ENCODE measurements at regions of chr7 and their contacts with region 1.

Region 1: DNA sequence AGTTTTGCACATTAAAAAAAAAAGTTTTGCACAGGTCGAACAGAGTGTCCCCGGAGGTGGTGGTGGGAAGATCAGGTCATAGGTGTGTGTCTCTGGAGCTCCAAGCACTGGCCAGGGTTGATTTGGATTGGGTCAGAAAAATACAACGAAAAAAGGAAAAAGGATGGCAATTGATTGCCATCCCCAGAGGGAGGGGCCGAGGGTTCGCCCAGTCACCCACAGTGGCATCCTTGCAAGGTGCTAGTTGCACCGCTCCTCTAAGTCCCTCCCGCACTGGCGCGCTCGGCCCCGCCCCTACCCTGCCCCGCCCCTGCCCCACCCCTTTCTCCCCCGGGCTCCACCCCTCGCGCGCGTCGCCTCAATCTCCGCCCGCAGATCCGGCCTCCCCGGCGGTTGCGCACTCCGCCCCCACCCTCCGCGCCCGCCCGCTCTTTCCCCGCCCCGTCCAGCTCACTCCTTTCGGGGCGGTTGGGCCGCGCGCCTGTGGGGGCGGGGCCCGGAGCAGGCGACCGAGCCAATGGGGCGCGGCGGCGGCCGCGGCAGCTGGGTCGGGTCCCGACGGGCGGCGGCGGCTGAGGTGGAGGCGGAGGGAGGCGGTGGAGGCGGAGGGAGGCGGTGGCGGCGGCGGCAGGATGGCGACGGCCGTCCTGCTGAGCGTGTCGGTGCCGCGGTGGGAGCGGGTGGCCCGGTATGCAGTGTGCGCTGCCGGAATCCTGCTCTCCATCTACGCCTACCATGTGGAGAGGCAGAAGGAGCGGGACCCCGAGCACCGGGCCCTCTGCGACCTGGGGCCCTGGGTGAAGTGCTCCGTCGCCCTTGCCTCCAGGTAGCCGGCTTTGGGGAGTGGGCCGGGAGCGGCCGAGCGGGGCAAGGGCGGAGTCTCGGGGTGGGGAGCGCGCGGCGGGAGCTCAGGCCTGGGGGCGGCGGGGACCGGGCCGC is 31.5 kb upstream of the ERV3-1 start:
- DNase-seq: peak; percentile 78
- ATAC-seq: peak; percentile 85
- H3K4me3 ChIP-seq: peak overlapping the region; percentile 75 to 91 (median 91); a peak in 5 of 6 replicates
- H3K27ac ChIP-seq: peak overlapping the region; percentile 85
- H3K4me1 ChIP-seq: peaks cover 42% of the 10 kb centered on the region
- H3K27me3 ChIP-seq: no peaks in the 10 kb centered on the region
- CTCF ChIP-seq: no peak
- EP300 ChIP-seq: no peak
- POLR2A ChIP-seq: peak; percentile 58 to 66
- RAD21 ChIP-seq: no peak

Region 2: DNA sequence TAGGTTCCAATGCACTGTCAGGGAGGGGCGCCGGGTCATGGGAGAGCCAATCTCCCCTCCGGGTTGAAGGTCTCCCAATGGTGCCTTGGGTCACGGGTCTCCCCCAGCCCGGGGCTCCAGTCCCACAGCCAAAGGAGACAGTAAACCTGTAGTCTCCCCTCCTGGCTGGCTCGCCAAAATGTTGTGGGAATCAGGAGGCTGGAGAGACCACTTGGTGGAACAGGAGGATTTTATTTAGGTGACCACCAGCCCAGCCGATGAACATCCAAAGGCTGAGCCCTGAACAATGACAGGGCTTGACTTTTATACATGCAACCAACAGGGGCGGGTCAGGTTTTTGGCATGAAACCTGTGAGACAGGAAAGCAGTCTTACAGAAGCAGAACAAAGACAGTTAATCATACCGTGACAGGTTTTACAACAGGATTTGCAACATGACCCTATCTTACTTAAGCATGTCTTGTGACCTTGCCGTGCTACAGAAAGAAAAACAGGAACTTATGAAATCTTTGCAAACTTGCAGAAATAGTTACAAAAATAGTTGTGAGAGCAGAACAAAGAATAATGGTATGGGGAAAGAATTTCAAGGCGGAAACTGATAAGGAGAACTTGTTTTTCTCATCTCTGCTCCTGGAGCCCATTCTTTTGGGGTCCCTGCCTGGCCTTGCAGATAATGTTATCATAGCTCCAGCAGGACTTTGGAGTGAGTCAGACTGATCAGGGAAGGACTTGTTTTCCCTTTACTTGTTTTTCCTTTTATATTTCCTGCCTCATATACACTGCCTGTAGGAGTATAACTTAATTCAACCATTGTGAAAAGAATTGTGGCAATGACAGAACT is 38.6 kb before region 1 on chr7:
- CTCF ChIA-PET with region 1: no interaction called
- POLR2A ChIA-PET with region 1: interaction called, 68 read pairs
- in situ Hi-C with region 1: no loop called
- intact Hi-C with region 1: loop called (anchors 5 kb)
- DNase-seq: peak; percentile 98
- ATAC-seq: peak; percentile 71
- H3K4me3 ChIP-seq: peak overlapping the region in 1 of 3 experiments; percentile 12; a peak in 2 of 6 replicates
- H3K27ac ChIP-seq: peak overlapping the region; percentile 90
- H3K4me1 ChIP-seq: peaks cover 72% of the 10 kb centered on the region
- H3K27me3 ChIP-seq: no peaks in the 10 kb centered on the region
- CTCF ChIP-seq: no peak
- EP300 ChIP-seq: peak; percentile 89 to 99
- POLR2A ChIP-seq: peak; percentile 43 to 57; a peak in 3 of 4 replicates
- RAD21 ChIP-seq: no peak; the same call in 1 of the 2 replicates

Region 3: DNA sequence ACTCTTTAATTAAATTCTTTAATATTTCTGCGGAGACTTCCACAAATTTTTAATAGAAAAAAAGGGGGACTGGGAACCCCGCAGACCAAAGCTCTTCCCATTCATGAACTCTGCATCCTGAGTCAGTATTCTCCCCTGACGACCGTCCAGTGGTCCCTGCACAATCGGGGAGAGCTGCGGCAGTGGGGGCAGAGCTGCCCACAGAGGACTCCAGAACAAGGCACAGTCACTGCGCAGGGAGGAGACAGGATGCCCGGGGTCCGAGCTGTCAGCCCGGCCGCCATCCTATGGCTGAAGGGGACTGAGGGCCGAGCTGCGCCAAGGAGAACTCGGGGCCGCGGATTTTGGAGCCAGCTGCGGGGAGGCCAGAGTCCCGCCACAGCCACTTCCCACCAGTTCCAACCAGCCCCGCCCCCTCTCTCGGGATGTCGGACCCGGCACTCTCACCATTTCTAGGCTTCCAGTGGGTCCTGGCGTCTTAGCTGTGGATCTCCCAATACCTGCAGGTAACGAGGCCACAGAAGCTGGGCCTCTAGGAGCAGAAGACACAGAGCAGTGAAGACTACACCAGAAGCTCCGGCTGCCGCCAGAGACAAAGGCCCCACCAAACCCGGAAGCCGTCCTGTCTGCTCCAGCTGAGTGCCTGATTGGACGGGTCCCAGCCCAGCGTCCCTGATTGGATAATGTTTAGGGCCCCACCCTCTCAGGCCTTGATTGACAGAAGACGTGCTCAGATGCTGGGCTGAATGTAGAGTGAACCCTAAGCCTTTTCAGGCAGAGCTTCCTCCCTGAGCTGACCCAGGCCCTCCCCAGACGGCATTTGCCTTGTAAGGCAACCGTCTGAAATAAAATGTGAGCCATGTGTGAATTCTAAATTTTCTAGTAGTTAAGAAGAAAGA is 31.7 kb before region 1 on chr7 and contains the start of gene ERV3-1:
- CTCF ChIA-PET with region 1: no interaction called
- POLR2A ChIA-PET with region 1: interaction called, 68 read pairs
- in situ Hi-C with region 1: no loop called
- intact Hi-C with region 1: loop called (anchors 5 kb)
- DNase-seq: peak; percentile 97
- ATAC-seq: peak; percentile 98
- H3K4me3 ChIP-seq: peak within 1 kb of the TSS; percentile 93 to 97 (median 93)
- H3K27ac ChIP-seq: peak within 1 kb of the TSS; percentile 90
- H3K4me1 ChIP-seq: peaks cover 52% of the 10 kb centered on the region
- H3K27me3 ChIP-seq: no peaks in the 10 kb centered on the region; a peak in 3 of 5 replicates
- CTCF ChIP-seq: no peak
- EP300 ChIP-seq: no peak
- POLR2A ChIP-seq: peak; percentile 93 to 96
- RAD21 ChIP-seq: no peak
- total RNA-seq, gene ERV3-1: 12.0 and 20.4 TPM in 2 replicates

Measured in HepG2 (cell line).